ENCODE measurements at regions of chr2 and their contacts with region 1.

Region 1: DNA sequence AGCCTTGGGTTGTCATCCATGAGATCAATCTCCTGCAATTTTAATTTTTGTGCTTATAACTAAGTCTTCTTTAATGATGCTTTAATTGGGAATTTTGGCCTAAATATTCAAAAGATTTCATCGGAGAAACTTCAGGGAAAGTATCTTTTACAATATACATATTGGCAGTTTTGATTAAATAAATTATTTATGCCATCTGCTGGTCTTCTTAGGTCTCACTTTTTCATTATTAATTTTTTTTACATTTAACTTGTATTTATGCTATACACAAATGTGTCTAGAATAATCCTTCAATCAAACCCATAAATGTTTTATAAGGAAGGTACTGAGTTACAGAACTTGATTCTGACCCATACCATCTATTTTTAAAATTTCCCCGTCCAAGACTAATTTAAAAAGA is 95.1 kb upstream of the XPO1 start:
- DNase-seq: no peak
- H3K4me3 ChIP-seq: no peak overlapping the region
- H3K27ac ChIP-seq: no peak overlapping the region
- H3K4me1 ChIP-seq: 0 out of 2 replicates have a peak, but pooled peaks cover 6% of the 10 kb centered on the region
- H3K27me3 ChIP-seq: no peaks in the 10 kb centered on the region
- CTCF ChIP-seq: peak; percentile 33; the same call in 1 of the 2 replicates

Region 2: DNA sequence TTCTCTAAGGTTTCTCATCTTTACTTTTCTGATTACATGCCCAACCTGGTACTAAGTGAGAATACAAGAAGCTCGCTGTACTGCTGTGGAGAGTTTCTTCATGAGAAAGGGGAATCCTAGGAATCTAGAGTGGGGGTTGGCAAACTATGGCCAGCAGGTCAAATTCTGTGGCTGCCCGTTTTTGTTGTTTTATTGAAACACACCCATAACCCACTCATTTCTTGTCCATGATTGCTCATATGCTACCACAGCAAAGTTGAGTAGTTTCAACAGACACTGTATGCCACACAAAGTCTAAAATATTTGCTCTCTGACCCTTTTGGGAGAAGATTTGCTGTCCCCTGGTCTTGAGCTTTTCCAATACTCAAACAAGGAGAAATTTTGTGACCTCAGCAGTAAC is 412.5 kb before region 1 on chr2:
- CTCF ChIA-PET with region 1: no interaction called
- POLR2A ChIA-PET with region 1: interaction called, 11 read pairs
- intact Hi-C with region 1: no loop called
- DNase-seq: no peak
- H3K4me3 ChIP-seq: no peak overlapping the region
- H3K27ac ChIP-seq: peak overlapping the region; percentile 39; the same call in 1 of the 2 replicates
- H3K4me1 ChIP-seq: peaks cover 28% of the 10 kb centered on the region
- H3K27me3 ChIP-seq: no peaks in the 10 kb centered on the region
- CTCF ChIP-seq: no peak

Region 3: GRCh38 chr2:61356261-61356957 is 276.8 kb before region 1 on chr2:
- CTCF ChIA-PET with region 1: no interaction called
- POLR2A ChIA-PET with region 1: no interaction called
- intact Hi-C with region 1: loop called (anchors 10 kb)
- DNase-seq: peak in 1 of 2 experiments; percentile 39
- H3K4me3 ChIP-seq: no peak overlapping the region
- H3K27ac ChIP-seq: 0 out of 2 replicates have a peak overlapping the region, but pooled peaks have one; percentile 38
- H3K4me1 ChIP-seq: no peaks in the 10 kb centered on the region
- H3K27me3 ChIP-seq: no peaks in the 10 kb centered on the region
- CTCF ChIP-seq: no peak

Region 4: DNA sequence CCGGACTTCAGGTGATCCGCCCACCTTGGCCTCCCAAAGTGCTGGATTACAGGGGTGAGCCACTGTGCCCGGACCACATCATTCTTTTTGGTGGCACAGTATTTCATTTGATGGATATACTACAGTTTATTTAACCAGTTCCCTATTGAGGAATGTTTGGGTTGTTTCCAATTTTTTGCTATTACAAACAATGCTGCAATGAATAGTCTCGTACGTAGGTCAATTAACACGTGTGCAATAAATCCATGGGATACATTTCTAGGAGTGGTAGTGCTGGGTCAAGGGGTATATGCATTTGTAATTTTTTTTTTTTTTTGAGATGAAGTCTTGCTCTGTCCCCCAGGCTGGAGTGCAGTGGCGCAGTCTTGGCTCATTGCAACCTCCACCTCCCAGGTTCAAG is 66.7 kb before region 1 on chr2:
- CTCF ChIA-PET with region 1: no interaction called
- POLR2A ChIA-PET with region 1: no interaction called
- intact Hi-C with region 1: no loop called
- DNase-seq: no peak
- H3K4me3 ChIP-seq: no peak overlapping the region
- H3K27ac ChIP-seq: no peak overlapping the region
- H3K4me1 ChIP-seq: peaks cover 10% of the 10 kb centered on the region; the same call in 1 of the 2 replicates
- H3K27me3 ChIP-seq: no peaks in the 10 kb centered on the region
- CTCF ChIP-seq: no peak

Region 5: GRCh38 chr2:61658841-61659780 is 25.9 kb after region 1 on chr2:
- CTCF ChIA-PET with region 1: no interaction called
- POLR2A ChIA-PET with region 1: interaction called, 20 read pairs
- intact Hi-C with region 1: no loop called
- DNase-seq: peak in 1 of 2 experiments; percentile 74
- H3K4me3 ChIP-seq: no peak overlapping the region
- H3K27ac ChIP-seq: peak overlapping the region; percentile 18; the same call in 1 of the 2 replicates
- H3K4me1 ChIP-seq: peaks cover 10% of the 10 kb centered on the region; the same call in 1 of the 2 replicates
- H3K27me3 ChIP-seq: no peaks in the 10 kb centered on the region
- CTCF ChIP-seq: peak; percentile 72

Measured in PC-9 (cell line).